ENCODE measurements at regions of chr5 and their contacts with region 1.

Region 1: GRCh38 chr5:131671994-131672655 is 37.1 kb upstream of the RAPGEF6 start:
- DNase-seq: peak in 1 of 5 donors; percentile 42
- ATAC-seq: peak; percentile 90 to 95 (median 94)
- H3K4me3 ChIP-seq: no peak overlapping the region
- H3K27ac ChIP-seq: peak overlapping the region; percentile 19 to 87 (median 78)
- H3K4me1 ChIP-seq: peaks cover 0 to 42% (median 27%) of the 10 kb centered on the region in 12 donors
- H3K27me3 ChIP-seq: no peaks in the 10 kb centered on the region
- CTCF ChIP-seq: no peak
- POLR2A ChIP-seq: no peak

Region 2: GRCh38 chr5:131634996-131635754 is 37.0 kb before region 1 on chr5 and contains the start of gene RAPGEF6:
- intact Hi-C with region 1: loop called in 2 of 10 experiments (anchors 2 to 5 kb)
- DNase-seq: peak; percentile 97 to 99 (median 99)
- ATAC-seq: peak; percentile 95 to 98 (median 96)
- H3K4me3 ChIP-seq: peak within 1 kb of the TSS; percentile 35 to 87 (median 70)
- H3K27ac ChIP-seq: peak within 1 kb of the TSS; percentile 93 to 100 (median 98)
- H3K4me1 ChIP-seq: peaks cover 0 to 48% (median 29%) of the 10 kb centered on the region in 12 donors
- H3K27me3 ChIP-seq: no peaks in the 10 kb centered on the region
- CTCF ChIP-seq: peak in 2 of 12 donors; percentile 15 to 16
- POLR2A ChIP-seq: peak in 1 of 2 donors; percentile 66
- total RNA-seq, gene RAPGEF6: 7.0 to 13.9 (median 10.0) TPM